ENCODE measurements at regions of chr3 and their contacts with region 1.

Region 1: DNA sequence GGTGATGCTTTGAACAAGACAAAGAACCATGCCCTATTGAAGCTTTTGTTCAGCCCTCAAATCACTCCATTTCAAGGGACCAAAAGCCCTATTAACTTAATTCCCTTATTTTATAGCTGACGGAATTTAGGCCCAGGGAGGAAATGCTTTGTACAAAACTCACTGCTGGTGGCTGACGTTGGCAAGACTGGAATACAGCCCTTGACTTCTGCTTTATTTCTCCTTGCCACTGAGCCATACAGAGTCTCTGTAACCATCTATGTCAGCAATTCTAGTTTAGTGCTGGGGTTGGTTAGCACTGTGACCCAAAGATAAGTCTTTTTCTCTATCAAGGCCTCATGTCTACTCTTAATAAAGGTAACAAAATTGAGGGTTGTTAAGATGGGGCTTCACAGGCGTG is 316.1 kb upstream of the TPRG1 start:
- DNase-seq: no peak
- H3K4me3 Mint-ChIP-seq: no peak overlapping the region
- H3K27ac Mint-ChIP-seq: no peak overlapping the region
- H3K4me1 Mint-ChIP-seq: no peaks in the 10 kb centered on the region
- H3K27me3 Mint-ChIP-seq: no peaks in the 10 kb centered on the region
- CTCF ChIP-seq: no peak

Region 2: GRCh38 chr3:188788621-188789081 is 67.0 kb before region 1 on chr3:
- CTCF ChIA-PET with region 1: no interaction called
- intact Hi-C with region 1: loop called (anchors 2 kb)
- DNase-seq: no peak
- H3K4me3 Mint-ChIP-seq: no peak overlapping the region
- H3K27ac Mint-ChIP-seq: no peak overlapping the region
- H3K4me1 Mint-ChIP-seq: no peaks in the 10 kb centered on the region
- H3K27me3 Mint-ChIP-seq: no peaks in the 10 kb centered on the region
- CTCF ChIP-seq: no peak

Region 3: GRCh38 chr3:189027626-189028155 is 172.0 kb after region 1 on chr3:
- CTCF ChIA-PET with region 1: no interaction called
- intact Hi-C with region 1: no loop called
- DNase-seq: no peak
- H3K4me3 Mint-ChIP-seq: no peak overlapping the region
- H3K27ac Mint-ChIP-seq: no peak overlapping the region
- H3K4me1 Mint-ChIP-seq: no peaks in the 10 kb centered on the region
- H3K27me3 Mint-ChIP-seq: peaks cover 27% of the 10 kb centered on the region
- CTCF ChIP-seq: no peak

Measured in Calu3 (cell line).